Left ventricle myocardium inferior (tissue), 1 donor: ENCODE measurements at regions of chr10 and their contacts with region 1.

Region 1: GRCh38 chr10:90862908-90863514 is 5.2 kb upstream of the HTR7 start:
- DNase-seq: no peak
- H3K4me3 ChIP-seq: no peak overlapping the region
- H3K27ac ChIP-seq: no peak overlapping the region
- H3K4me1 ChIP-seq: no peaks in the 10 kb centered on the region
- H3K27me3 ChIP-seq: peaks cover 29% of the 10 kb centered on the region
- CTCF ChIP-seq: peak; percentile 65

Region 2: DNA sequence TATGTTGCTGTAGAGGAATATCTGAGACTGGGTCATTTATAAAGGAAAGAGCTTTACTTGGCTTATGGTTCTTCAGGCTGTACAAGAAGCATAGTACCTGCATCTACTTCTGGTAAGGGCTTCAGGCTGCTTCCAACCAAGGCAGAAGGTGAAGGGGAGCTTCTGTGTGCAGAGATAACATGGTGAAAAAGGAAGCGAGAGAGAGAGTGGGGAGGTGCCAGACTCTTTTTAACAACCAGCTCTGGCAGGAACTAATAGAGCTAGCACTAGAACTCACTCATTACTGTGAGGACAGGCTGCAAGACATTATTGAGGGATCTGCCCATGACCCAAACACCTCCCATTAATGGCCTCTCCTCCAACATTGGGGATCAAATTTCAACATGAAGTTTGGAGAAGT is 1067.2 kb before region 1 on chr10:
- intact Hi-C with region 1: loop called (anchors 5 kb)
- DNase-seq: no peak
- H3K4me3 ChIP-seq: no peak overlapping the region
- H3K27ac ChIP-seq: no peak overlapping the region
- H3K4me1 ChIP-seq: no peaks in the 10 kb centered on the region
- H3K27me3 ChIP-seq: peaks cover 27% of the 10 kb centered on the region
- CTCF ChIP-seq: no peak